ENCODE measurements at regions of chr5 and their contacts with region 1.

Region 1: DNA sequence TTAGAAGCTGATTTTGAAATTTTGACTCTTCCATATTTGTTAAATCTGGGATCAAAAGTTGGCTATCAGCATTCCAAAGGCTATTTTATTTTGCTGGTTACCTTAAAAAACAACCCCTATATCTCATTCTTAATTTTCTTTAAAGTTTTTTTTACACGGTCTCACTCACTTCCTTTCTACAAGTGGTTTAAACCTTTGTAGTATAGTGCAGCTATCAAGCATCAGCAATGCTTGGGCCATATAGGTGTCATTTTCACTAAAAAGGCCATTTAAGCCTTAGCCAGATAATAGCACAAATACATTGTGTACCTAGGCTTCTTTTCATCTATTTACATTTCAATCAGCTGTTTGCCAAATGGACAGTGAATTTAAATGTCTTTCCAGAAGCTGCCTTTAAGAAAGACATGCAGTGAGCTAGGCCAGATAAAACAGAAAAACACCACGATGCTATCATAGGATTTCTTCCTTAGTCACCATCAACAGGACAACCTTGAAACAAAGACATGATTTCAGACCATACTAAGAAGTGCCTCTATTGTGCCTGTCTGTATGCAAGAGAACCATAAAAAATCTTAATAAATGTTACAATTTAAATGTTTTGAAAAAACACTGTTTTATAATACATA is 104.2 kb downstream of the RAPGEF6 start:
- DNase-seq: no peak
- H3K4me3 Mint-ChIP-seq: peak overlapping the region; percentile 66
- H3K27ac Mint-ChIP-seq: peak overlapping the region; percentile 30
- H3K4me1 Mint-ChIP-seq: peaks cover 57% of the 10 kb centered on the region
- H3K27me3 Mint-ChIP-seq: no peaks in the 10 kb centered on the region

Region 2: GRCh38 chr5:131514316-131515283 is 16.2 kb before region 1 on chr5:
- intact Hi-C with region 1: loop called (anchors 2 kb)
- DNase-seq: peak; percentile 73
- H3K4me3 Mint-ChIP-seq: peak overlapping the region; percentile 70
- H3K27ac Mint-ChIP-seq: peak overlapping the region; percentile 43
- H3K4me1 Mint-ChIP-seq: peaks cover 30% of the 10 kb centered on the region
- H3K27me3 Mint-ChIP-seq: no peaks in the 10 kb centered on the region

Measured in activated CD4-positive, alpha-beta T cell treated with anti-CD3 and anti-CD28 coated beads, Interleukin-2, amount 10 ng/mL, durations not matched to agents 24 days and 14 days (primary cell).